MCF 10A (cell line): ENCODE measurements at regions of chr9 and their contacts with region 1.

Region 1: GRCh38 chr9:101387871-101388506 is 3.2 kb upstream of the BAAT start:
- DNase-seq: peak; percentile 56
- H3K4me3 Mint-ChIP-seq: no peak overlapping the region
- H3K27ac Mint-ChIP-seq: no peak overlapping the region
- H3K4me1 Mint-ChIP-seq: peaks cover 18% of the 10 kb centered on the region
- H3K27me3 Mint-ChIP-seq: no peaks in the 10 kb centered on the region
- CTCF ChIP-seq: peak; percentile 58

Region 2: GRCh38 chr9:101119206-101119819 is 268.7 kb before region 1 on chr9:
- CTCF ChIA-PET with region 1: interaction called, 10 read pairs
- POLR2A ChIA-PET with region 1: no interaction called
- intact Hi-C with region 1: loop called (anchors 5 kb)
- DNase-seq: peak; percentile 64
- H3K4me3 Mint-ChIP-seq: no peak overlapping the region
- H3K27ac Mint-ChIP-seq: no peak overlapping the region
- H3K4me1 Mint-ChIP-seq: no peaks in the 10 kb centered on the region
- H3K27me3 Mint-ChIP-seq: peaks cover 47% of the 10 kb centered on the region
- CTCF ChIP-seq: peak; percentile 75

Region 3: DNA sequence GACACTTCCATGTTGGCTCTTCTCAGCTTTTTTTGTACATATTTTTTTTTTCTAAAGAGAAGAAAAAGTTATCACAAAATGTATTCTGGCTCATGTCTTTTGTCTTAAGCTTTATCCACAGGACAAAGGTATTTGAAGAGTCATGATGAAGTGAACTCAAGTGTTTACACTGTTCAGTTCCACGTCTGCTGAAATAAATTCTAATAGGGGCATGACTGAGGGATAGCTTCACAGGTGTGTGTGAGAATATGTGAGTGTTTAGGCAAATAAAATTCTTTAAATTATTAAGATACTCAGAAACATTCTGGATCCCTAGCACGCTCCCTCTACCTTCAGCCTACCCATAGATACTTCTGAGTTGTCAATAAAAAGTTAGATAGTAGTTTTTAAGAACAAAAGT is 62.9 kb before region 1 on chr9:
- CTCF ChIA-PET with region 1: interaction called, 12 read pairs
- POLR2A ChIA-PET with region 1: interaction called, 6 read pairs
- intact Hi-C with region 1: no loop called
- DNase-seq: no peak
- H3K4me3 Mint-ChIP-seq: no peak overlapping the region
- H3K27ac Mint-ChIP-seq: no peak overlapping the region
- H3K4me1 Mint-ChIP-seq: peaks cover 7% of the 10 kb centered on the region
- H3K27me3 Mint-ChIP-seq: peaks cover 10% of the 10 kb centered on the region
- CTCF ChIP-seq: no peak

Region 4: GRCh38 chr9:101376111-101376848 is 11.7 kb before region 1 on chr9:
- CTCF ChIA-PET with region 1: interaction called, 42 read pairs
- POLR2A ChIA-PET with region 1: interaction called, 6 read pairs
- intact Hi-C with region 1: no loop called
- DNase-seq: no peak
- H3K4me3 Mint-ChIP-seq: no peak overlapping the region
- H3K27ac Mint-ChIP-seq: no peak overlapping the region
- H3K4me1 Mint-ChIP-seq: no peaks in the 10 kb centered on the region
- H3K27me3 Mint-ChIP-seq: no peaks in the 10 kb centered on the region
- CTCF ChIP-seq: no peak

Region 5: DNA sequence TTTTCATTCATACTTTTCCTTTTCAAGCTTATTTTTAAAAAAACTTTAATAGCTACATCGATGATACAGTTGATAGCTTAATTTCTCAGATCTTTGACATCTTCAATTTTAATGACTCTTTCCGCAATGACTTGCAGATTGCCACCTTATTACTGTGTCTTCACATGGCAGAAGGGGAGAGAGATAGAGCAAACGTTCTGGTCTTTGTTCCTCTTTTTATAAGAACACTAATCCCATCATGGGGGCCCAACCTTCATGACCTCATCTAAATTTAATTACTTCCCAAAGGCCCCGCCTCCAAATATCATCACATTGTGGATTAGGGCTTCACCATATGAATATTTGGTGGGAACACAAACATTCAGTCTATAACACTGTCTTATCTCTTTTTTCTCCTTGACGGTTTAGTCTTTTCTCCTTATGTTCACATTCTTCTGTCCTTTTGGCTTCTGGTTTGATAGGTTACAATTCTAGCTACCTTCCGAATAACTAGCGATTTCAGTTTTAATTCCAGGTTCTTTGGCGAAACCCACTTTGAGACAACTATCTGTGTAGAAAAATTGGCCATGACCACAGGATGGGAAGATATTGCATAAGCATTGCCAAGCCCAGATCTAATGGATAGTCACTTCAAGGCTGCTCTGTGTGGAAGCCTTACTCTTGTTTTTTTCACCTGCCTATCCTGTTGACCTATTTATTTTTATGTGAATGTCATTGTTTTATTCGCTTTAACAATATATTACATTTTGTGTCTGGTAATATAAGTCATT is 15.7 kb after region 1 on chr9:
- CTCF ChIA-PET with region 1: interaction called, 14 read pairs
- POLR2A ChIA-PET with region 1: interaction called, 34 read pairs
- intact Hi-C with region 1: no loop called
- DNase-seq: no peak
- H3K4me3 Mint-ChIP-seq: no peak overlapping the region
- H3K27ac Mint-ChIP-seq: no peak overlapping the region
- H3K4me1 Mint-ChIP-seq: peaks cover 20% of the 10 kb centered on the region
- H3K27me3 Mint-ChIP-seq: no peaks in the 10 kb centered on the region
- CTCF ChIP-seq: no peak